Gastrocnemius medialis (tissue), 4 donors: ENCODE measurements at regions of chr19 and their contacts with region 1.

Region 1: DNA sequence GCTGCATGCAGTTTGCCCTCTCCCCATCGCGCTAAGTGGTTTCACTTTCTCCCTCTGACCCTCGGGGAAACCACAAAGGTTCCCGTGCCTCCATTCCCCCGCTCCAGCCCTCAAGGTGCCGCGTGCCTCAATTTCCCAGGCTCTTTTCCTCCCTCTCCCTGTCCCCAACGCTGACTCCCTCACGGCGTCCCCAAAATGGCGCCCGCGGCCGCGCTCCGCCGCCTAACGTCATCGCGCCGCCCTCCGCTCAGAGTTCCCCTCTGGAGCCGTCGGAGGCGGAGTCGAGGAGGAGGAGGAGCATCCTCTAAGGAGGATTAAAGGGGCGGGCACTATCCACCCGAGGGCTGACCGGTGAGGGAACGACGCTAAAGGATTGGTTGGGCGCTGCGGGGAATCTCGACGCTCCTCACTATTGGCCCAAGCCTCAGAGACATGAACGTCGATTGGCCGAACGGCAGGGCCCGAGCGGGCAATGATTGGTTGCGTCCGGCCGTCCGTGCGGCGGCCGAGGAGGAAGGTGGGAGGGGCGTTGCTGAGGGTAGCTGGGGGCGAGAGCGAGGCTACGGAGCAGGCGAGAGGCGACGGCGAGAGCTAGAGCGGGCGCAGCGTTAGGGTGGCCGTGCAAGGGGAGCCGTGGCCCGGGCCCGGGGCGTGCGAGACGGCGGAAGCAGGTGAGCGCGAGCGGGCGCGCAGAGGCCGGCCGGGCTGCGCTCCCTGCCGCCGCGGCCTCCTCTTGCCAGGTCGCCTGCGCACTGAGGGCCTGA is at the start of gene ZNF574:
- DNase-seq: peak; percentile 99
- ATAC-seq: peak; percentile 98
- H3K4me3 ChIP-seq: peak within 1 kb of the TSS; percentile 76 to 95 (median 80)
- H3K27ac ChIP-seq: peak within 1 kb of the TSS; percentile 93 to 100 (median 96)
- H3K4me1 ChIP-seq: peaks cover 15 to 18% of the 10 kb centered on the region in 2 donors
- H3K27me3 ChIP-seq: no peaks in the 10 kb centered on the region
- CTCF ChIP-seq: no peak
- POLR2A ChIP-seq: peak; percentile 76 to 91
- total RNA-seq, gene ZNF574: 10.8 to 15.1 (median 13.8) TPM

Region 2: GRCh38 chr19:41959056-41960053 is 116.4 kb before region 1 on chr19 and contains the start of gene RABAC1:
- in situ Hi-C with region 1: no loop called
- intact Hi-C with region 1: loop called (anchors 2 kb)
- DNase-seq: peak; percentile 81 to 83
- ATAC-seq: peak; percentile 96
- H3K4me3 ChIP-seq: peak within 1 kb of the TSS; percentile 63 to 96 (median 92)
- H3K27ac ChIP-seq: peak within 1 kb of the TSS; percentile 82 to 89 (median 86)
- H3K4me1 ChIP-seq: peaks cover 11 to 15% of the 10 kb centered on the region in 2 donors
- H3K27me3 ChIP-seq: no peaks in the 10 kb centered on the region
- CTCF ChIP-seq: no peak
- POLR2A ChIP-seq: peak in 1 of 2 donors; percentile 32
- total RNA-seq, gene RABAC1: 94.4 to 146 (median 110) TPM

Region 3: DNA sequence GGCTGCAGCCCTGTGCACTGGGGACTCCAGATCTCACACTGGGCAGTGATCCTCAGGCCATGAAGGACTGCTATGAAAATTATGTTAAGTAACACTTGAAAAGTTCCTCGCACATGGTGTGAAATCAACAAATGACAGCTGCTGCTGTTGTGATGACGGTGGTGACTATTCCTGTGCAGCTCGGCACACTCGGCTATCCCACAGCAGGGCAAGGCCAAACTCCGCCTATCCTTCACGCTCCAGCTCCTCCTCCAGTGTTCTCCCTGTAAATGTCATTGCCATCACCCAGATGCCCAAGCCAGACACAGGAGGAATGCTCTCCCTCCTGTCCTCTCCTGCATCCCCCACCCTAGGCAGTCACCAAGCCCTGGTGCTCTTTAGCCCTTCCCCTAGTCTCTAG is 37.1 kb before region 1 on chr19:
- in situ Hi-C with region 1: no loop called
- intact Hi-C with region 1: loop called (anchors 1 kb)
- DNase-seq: peak; percentile 26 to 82
- ATAC-seq: peak; percentile 92 to 95
- H3K4me3 ChIP-seq: no peak overlapping the region
- H3K27ac ChIP-seq: peak overlapping the region; percentile 67 to 75 (median 70)
- H3K4me1 ChIP-seq: peaks cover 10 to 12% of the 10 kb centered on the region in 2 donors
- H3K27me3 ChIP-seq: no peaks in the 10 kb centered on the region
- CTCF ChIP-seq: no peak
- POLR2A ChIP-seq: peak in 1 of 2 donors; percentile 15